ENCODE measurements at regions of chrX and their contacts with region 1.

Region 1: DNA sequence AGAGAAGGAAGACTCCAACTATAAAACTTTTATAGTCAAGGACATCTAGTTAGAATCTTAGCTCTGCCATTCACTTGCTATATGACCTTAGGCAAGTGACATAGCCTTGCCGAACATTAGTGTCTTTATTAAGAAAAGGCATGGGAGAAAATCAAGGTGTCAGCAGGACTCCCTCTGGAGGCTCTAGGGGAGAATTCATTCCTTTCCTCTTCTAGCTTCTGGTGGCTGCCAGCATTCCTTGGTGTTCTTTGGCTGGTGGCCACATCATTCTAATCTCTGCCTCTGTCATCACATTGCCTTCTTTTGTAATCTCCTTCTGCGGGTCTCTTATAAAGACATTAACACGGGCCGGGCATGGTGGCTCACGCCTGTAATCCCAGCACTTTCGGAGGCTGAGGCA is 99.8 kb downstream of the PPP1R2C start:
- DNase-seq: peak; percentile 3
- H3K4me3 Mint-ChIP-seq: no peak overlapping the region
- H3K27ac Mint-ChIP-seq: no peak overlapping the region
- H3K4me1 Mint-ChIP-seq: no peaks in the 10 kb centered on the region
- H3K27me3 Mint-ChIP-seq: no peaks in the 10 kb centered on the region
- CTCF ChIP-seq: no peak

Region 2: GRCh38 chrX:41781502-41781901 is 896.6 kb before region 1 on chrX:
- CTCF ChIA-PET with region 1: no interaction called
- intact Hi-C with region 1: loop called (anchors 5 kb)
- DNase-seq: peak; percentile 18
- H3K4me3 Mint-ChIP-seq: no peak overlapping the region
- H3K27ac Mint-ChIP-seq: no peak overlapping the region
- H3K4me1 Mint-ChIP-seq: no peaks in the 10 kb centered on the region
- H3K27me3 Mint-ChIP-seq: no peaks in the 10 kb centered on the region
- CTCF ChIP-seq: peak; percentile 59

Region 3: DNA sequence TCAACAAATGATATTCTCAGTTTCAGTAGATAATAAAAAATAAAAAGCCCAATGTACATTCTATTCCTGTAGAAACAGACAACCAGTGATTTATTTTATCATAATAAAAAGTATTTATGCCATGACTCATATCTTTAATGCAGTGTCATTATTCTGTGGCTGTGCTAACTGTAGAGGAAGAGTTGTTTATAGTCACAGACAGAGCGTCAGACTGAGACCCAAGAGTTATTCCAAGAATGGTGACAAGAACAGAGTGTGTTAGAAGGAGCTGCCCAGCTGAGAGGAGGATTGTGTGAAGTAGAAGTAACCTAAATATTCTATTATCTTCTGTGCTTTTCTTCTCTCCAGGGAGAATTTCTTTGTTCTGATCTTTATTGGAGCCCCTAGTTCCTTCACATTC is 110.9 kb before region 1 on chrX:
- CTCF ChIA-PET with region 1: no interaction called
- intact Hi-C with region 1: no loop called
- DNase-seq: no peak
- H3K4me3 Mint-ChIP-seq: no peak overlapping the region
- H3K27ac Mint-ChIP-seq: no peak overlapping the region
- H3K4me1 Mint-ChIP-seq: no peaks in the 10 kb centered on the region
- H3K27me3 Mint-ChIP-seq: peaks cover 14% of the 10 kb centered on the region
- CTCF ChIP-seq: no peak